IMR-90 (cell line): ENCODE measurements at regions of chr2 and their contacts with region 1.

Region 1: GRCh38 chr2:375270-375955 is 87.5 kb upstream of the ALKAL2 start:
- DNase-seq: no peak
- ATAC-seq: no peak
- H3K4me3 ChIP-seq: no peak overlapping the region
- H3K27ac ChIP-seq: no peak overlapping the region
- H3K4me1 ChIP-seq: no peaks in the 10 kb centered on the region
- H3K27me3 ChIP-seq: no peaks in the 10 kb centered on the region
- CTCF ChIP-seq: no peak
- POLR2A ChIP-seq: no peak
- RAD21 ChIP-seq: no peak

Region 2: DNA sequence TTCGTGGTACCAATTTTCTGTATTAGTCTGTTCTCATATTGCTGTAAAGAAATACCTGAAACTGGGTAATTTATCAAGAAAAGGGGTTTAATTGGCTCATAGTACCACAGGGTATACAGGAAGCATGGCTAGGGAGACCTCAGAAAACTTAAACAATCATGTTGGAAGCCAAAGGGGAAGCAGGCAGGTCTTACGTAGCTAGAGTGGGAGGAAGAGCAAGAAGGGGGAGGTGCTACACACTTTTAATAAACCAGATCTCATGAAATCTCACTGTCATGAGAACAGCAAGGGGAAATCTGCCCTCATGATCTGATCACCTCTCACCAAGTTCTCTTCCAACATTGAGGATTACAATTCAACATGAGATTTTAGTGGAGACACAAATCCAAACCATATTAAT is 811.0 kb after region 1 on chr2:
- CTCF ChIA-PET with region 1: no interaction called
- POLR2A ChIA-PET with region 1: no interaction called
- dilution Hi-C with region 1: no loop called
- in situ Hi-C with region 1: no loop called
- intact Hi-C with region 1: loop called (anchors 5 kb)
- DNase-seq: no peak
- ATAC-seq: no peak
- H3K4me3 ChIP-seq: no peak overlapping the region
- H3K27ac ChIP-seq: no peak overlapping the region
- H3K4me1 ChIP-seq: no peaks in the 10 kb centered on the region
- H3K27me3 ChIP-seq: no peaks in the 10 kb centered on the region
- CTCF ChIP-seq: no peak
- POLR2A ChIP-seq: no peak
- RAD21 ChIP-seq: no peak